OCI-LY7 (cell line): ENCODE measurements at regions of chr14 and their contacts with region 1.

Region 1: GRCh38 chr14:70640938-70641547 is 673 bp upstream of the TTC9 start:
- DNase-seq: peak; percentile 85
- H3K4me3 ChIP-seq: peak overlapping the region; percentile 86
- H3K27ac ChIP-seq: peak overlapping the region; percentile 82
- H3K4me1 ChIP-seq: peaks cover 46% of the 10 kb centered on the region
- CTCF ChIP-seq: 0 out of 2 replicates have a peak, but pooled peaks have one; percentile 20

Region 2: DNA sequence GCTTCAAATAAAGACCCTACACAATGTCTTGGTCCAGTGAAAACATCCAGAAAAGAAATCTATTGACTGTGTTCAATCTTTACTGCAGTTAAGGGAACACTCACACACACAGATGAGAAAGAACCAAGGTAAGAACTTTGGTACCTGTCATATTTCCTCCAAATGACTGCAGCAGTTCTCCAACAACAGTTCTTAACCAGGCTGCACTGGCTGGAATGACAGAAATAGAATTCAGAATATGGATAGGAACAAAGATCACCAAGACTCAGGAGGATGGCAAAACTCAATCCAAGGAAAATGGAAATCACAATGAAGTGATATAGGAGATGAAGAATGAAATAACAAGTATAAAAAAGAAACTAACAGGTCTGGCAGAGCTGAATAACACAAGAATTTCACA is 142.9 kb before region 1 on chr14:
- CTCF ChIA-PET with region 1: no interaction called
- POLR2A ChIA-PET with region 1: no interaction called
- intact Hi-C with region 1: no loop called
- DNase-seq: no peak
- H3K4me3 ChIP-seq: no peak overlapping the region
- H3K27ac ChIP-seq: no peak overlapping the region
- H3K4me1 ChIP-seq: no peaks in the 10 kb centered on the region
- CTCF ChIP-seq: no peak

Region 3: DNA sequence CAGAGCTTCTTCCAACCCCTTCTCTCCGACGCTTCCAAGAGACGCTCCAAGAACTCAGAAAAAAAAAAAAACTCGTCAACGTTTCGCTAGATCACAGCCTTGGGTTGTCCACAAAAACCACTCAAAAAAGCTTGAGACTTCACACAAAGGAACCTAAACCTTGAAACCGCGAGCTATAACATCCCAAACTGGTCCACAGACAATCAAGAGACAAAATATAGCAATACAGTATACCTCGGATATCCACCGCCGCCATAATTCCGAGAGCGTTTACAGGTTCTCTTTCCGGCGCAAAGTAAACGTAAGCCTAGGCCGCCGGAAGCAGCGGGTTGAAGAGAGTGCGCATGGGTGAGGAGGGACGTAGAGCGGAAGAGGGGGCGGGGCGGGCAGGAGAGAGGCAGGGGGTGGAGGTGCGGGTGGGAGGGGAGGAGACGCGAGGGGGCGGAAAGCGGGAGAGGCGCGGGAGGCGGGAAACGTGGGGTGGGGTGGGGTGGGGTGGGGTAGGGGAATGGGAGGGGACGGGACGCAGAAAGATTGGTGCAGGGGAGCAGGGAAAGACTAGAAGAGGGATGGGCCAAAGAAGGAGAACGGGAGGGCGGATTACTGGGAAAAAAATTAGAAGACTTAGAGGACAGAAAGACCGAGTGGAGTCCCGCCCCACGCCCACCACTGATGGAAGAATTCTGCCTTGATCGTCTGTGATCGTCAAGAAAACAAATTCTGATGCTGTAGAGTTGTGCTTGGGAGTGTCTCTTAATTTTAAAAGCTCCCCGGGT is 40.5 kb before region 1 on chr14 and contains the start of gene MED6:
- CTCF ChIA-PET with region 1: interaction called, 3 read pairs
- POLR2A ChIA-PET with region 1: interaction called, 7 read pairs
- intact Hi-C with region 1: loop called (anchors 1 kb)
- DNase-seq: peak; percentile 94
- H3K4me3 ChIP-seq: peak within 1 kb of the TSS; percentile 97
- H3K27ac ChIP-seq: peak within 1 kb of the TSS; percentile 34
- H3K4me1 ChIP-seq: peaks cover 34% of the 10 kb centered on the region
- CTCF ChIP-seq: no peak
- total RNA-seq, gene MED6: 28.4 and 28.8 TPM in 2 replicates

Region 4: DNA sequence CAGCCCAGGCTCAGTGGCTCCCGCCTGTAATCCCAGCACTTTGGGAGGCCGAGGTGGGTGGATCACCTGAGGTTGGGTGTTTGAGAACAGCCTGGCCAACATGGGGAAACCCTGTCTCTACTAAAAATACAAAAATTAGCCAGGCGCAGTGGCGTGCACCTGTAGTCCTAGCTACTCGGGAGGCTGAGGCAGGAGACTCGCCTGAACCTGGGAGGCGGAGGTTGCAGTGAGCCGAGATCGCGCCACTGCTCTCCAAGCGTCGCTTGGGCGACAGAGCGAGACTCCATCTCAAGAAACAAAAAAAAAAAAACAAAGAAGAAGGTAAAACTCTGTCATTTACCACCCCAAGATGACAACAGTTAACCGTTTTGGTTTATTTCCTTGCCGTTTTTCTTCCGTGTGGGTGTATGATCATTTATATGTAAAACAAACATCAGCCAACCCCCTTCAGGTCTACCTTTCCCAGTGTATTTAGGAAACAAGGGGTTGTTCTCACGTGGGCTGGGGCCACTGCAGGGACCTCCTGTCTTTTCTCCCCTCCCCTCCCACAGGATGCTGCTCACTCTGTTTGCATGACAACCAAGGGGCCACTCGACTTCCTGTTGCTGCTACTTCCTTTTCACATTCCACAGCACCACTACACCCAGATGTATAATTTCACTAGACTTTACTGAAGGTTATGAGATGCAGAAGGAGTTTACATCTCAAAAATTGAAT is 14.2 kb after region 1 on chr14:
- CTCF ChIA-PET with region 1: interaction called, 4 read pairs
- POLR2A ChIA-PET with region 1: interaction called, 77 read pairs
- intact Hi-C with region 1: loop called (anchors 1 kb)
- DNase-seq: peak; percentile 95
- H3K4me3 ChIP-seq: peak overlapping the region; percentile 64
- H3K27ac ChIP-seq: peak overlapping the region; percentile 99
- H3K4me1 ChIP-seq: peaks cover 87% of the 10 kb centered on the region
- CTCF ChIP-seq: no peak

Region 5: GRCh38 chr14:70665191-70665916 is 24.3 kb after region 1 on chr14:
- CTCF ChIA-PET with region 1: interaction called, 4 read pairs
- POLR2A ChIA-PET with region 1: interaction called, 77 read pairs
- intact Hi-C with region 1: loop called (anchors 1 kb)
- DNase-seq: peak; percentile 82
- H3K4me3 ChIP-seq: peak overlapping the region; percentile 47
- H3K27ac ChIP-seq: peak overlapping the region; percentile 93
- H3K4me1 ChIP-seq: peaks cover 100% of the 10 kb centered on the region
- CTCF ChIP-seq: no peak

Region 6: GRCh38 chr14:70714055-70714621 is 73.1 kb after region 1 on chr14:
- CTCF ChIA-PET with region 1: no interaction called
- POLR2A ChIA-PET with region 1: interaction called, 5 read pairs
- intact Hi-C with region 1: loop called (anchors 1 kb)
- DNase-seq: peak; percentile 79
- H3K4me3 ChIP-seq: no peak overlapping the region
- H3K27ac ChIP-seq: no peak overlapping the region
- H3K4me1 ChIP-seq: peaks cover 14% of the 10 kb centered on the region
- CTCF ChIP-seq: peak; percentile 90

Region 7: DNA sequence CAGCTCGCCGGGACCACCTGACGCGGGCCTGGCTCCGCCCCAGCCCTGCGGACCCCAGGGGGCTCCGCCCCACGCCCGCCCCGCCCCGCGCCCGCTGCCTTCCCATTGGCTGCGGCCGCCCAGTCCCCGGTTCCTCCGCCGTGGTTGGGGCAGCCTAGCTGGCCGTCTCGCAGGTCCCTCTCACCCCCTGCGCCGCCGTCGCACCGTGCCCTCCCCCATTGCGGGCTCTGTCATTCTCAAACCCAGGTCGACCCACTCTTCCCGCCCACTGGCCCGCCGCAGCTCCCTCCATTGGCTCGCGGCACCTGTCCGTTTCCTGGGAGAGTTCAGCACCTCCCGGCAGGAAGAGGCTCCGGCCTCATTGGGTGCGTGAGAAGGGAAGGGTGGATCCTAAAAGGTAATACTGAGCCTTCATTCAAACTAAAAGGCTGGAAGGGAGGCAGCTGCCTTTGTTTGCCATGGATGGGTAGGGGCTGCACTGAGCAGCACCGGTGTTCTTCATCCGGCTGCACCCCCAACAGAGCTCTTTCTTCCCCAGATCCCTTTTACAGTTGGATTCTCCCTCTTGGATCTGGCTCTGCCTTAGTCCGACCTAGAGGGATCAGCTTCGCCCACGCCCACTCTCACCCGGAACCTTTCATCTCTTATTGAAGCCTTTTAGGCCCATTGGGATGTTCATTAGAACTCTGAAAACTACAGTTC is 168.7 kb after region 1 on chr14:
- CTCF ChIA-PET with region 1: no interaction called
- POLR2A ChIA-PET with region 1: no interaction called
- intact Hi-C with region 1: loop called (anchors 1 kb)
- DNase-seq: peak; percentile 94
- H3K4me3 ChIP-seq: peak overlapping the region; percentile 77
- H3K27ac ChIP-seq: peak overlapping the region; percentile 28
- H3K4me1 ChIP-seq: peaks cover 35% of the 10 kb centered on the region
- CTCF ChIP-seq: no peak